ENCODE measurements at regions of chr20 and their contacts with region 1.

Region 1: DNA sequence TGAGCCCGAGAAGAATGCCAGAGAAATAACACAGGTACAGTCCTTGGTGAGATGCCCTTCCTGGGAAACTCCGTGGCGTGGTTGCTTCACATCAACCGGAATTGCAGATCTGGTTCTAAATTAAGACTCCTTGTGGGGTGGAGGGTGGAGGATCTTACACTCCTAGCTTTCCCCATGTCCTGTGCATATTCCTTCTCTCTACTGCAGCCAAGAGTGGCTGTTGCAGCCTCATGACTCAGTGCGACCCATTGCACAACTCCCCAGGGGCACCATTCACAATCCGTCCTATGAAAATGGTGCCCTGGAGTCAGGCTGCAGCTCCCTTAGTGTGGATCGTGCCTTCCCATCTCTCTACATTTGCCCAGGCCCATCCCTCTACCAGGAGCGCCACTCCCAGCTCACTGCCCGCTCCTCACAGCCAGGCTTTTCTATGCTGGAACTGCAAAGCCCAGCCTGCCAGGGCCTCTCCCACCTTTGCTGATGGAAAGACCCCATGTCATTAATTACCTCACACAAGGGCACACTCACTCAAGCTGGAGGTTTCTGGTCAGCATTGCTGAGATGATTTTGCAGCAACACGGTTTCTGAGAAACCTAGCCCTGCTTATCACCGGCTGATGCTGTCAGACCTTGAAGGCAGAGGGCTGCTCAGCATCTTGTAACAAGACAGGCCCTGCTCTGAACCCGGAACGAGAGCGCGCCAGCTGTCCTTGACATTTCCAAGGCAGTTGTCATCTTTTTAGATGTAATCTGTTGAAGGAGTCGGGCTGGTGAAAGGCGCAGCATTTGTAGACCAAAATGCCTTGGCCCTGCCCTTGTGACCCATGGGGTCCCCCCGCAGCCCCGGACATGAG is 39.7 kb downstream of the SIRPA start:
- DNase-seq: peak in 2 of 10 donors; percentile 35 to 44
- H3K4me3 ChIP-seq: peak overlapping the region in 14 of 59 donors; percentile 3 to 37 (median 17)
- H3K27ac ChIP-seq: peak overlapping the region; percentile 27 to 95 (median 86)
- H3K27me3 ChIP-seq: no peaks in the 10 kb centered on the region
- CTCF ChIP-seq: no peak

Region 2: GRCh38 chr20:1674361-1674760 is 260.6 kb before region 1 on chr20:
- intact Hi-C with region 1: no loop called
- DNase-seq: no peak
- H3K4me3 ChIP-seq: no peak overlapping the region
- H3K27ac ChIP-seq: peak overlapping the region in 38 of 59 donors; percentile 16 to 96 (median 88)
- H3K27me3 ChIP-seq: no peaks in the 10 kb centered on the region
- CTCF ChIP-seq: no peak

Region 3: DNA sequence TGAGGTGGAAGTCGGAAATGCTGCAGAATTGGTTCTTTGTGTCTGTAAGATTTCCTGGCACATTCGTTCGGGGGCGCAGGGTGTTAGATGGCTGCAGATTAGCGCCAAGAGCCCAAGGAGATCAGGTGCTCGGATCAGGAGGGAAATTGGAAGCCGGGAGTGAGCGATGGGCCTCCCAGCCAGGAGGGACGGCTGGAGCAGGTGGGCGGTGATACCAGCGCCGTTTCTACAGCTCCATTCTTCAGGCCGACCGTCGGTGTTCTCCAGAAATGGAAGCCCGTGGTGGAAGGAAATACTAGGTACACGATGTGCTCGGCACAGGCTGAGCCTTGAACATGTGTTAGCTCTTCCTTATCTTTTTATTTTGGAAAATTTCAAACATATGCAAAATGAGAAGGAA is 33.2 kb before region 1 on chr20:
- intact Hi-C with region 1: loop called (anchors 2 to 5 kb)
- DNase-seq: peak in 6 of 10 donors; percentile 50 to 83 (median 75)
- H3K4me3 ChIP-seq: peak overlapping the region in 7 of 59 donors; percentile 1 to 89 (median 17)
- H3K27ac ChIP-seq: peak overlapping the region in 58 of 59 donors; percentile 44 to 100 (median 99)
- H3K27me3 ChIP-seq: no peaks in the 10 kb centered on the region
- CTCF ChIP-seq: no peak